ENCODE measurements at regions of chr11 and their contacts with region 1.

Region 1: GRCh38 chr11:47355283-47356128 is 3.0 kb upstream of the MYBPC3 start:
- DNase-seq: peak; percentile 96
- ATAC-seq: peak; percentile 78

Region 2: GRCh38 chr11:47176328-47177228 is 178.9 kb before region 1 on chr11 and contains the start of gene ARFGAP2:
- intact Hi-C with region 1: loop called (anchors 10 kb)
- DNase-seq: peak; percentile 97
- ATAC-seq: peak; percentile 95
- total RNA-seq, gene ARFGAP2: 94.2 TPM

Region 3: DNA sequence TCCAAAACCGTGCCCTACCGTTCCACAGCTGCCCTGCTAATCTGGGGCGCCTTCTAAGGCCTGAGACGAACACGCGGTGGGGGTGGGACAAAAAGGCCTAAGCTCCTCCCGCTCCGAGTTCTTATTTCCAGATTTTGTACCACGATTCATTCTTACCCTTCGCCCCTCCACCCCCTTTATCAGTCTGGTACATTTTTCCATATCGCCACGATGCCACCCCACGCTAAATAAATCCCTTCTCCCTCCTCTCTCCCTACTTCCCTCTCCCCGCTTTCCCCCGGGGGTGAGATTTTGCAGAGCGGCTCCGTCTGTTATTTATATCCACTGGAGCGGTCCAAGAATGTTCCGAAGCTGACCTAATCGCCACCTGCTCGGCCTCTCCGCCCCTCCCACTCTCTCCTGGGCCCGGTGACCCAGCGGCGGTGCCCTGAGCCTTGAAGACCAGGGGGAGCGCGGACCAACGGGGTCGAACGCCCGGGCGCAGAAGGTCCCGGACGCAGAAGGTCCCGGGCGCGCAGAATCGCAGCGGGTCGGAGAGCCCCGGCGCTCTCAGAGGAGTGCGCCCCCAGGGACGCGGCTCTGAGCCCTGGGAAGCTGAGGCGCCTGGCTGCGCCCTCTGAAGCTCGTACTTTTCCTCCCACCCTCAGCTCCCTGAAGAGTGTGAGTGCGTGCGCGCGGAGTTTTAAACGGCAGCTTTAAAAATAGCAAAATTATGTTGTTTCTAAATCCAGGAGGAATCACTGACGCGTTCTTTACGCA is 168.4 kb before region 1 on chr11:
- intact Hi-C with region 1: no loop called
- DNase-seq: peak; percentile 79
- ATAC-seq: peak; percentile 74